HEK293 (cell line): ENCODE measurements at regions of chr3 and their contacts with region 1.

Region 1: GRCh38 chr3:150603153-150603979 is at the start of gene SELENOT:
- H3K4me3 ChIP-seq: peak within 1 kb of the TSS; percentile 83
- H3K27ac ChIP-seq: peak within 1 kb of the TSS; percentile 79
- H3K4me1 ChIP-seq: peaks cover 3% of the 10 kb centered on the region; the same call in 1 of the 2 replicates
- CTCF ChIP-seq: peak; percentile 97

Region 2: DNA sequence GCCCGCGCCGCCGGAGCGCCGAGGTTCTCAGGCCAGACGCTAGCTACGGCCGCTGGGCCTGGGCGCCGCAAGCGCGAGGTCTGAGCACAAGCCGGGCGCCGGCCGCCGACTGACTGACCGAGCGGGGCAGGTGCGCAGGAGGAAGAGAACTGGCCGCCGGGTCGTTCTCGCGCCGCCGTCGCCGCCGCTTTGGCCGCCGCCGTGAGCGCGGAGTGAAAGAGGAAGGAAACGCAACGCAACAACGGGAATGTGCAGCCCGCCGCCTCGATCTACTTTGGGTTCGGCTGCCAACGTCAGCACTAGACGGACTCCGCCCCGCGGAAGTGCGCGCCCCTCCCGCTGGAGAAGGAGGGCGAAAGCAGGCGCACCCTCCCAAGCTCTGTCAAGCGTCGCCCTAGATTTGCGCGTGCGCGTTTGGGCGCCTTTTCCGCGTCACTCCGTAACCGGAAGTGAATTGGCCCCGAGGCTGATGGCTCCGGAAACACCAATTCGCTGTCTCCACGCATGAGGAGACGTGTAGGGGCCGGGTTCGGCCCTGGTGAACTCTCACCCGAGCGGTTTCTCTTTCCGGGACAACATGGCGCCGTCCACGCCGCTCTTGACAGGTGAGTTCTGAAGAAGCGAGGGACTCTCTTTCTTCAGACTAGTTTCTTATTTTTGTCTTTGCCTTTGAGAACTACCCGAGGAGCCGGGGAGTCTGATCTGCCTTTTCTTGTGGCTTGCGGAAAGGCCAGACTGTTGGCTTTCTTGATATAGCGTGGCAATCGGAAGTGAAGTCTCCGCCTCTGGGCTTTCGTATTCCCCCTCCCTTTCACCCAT is 56.9 kb before region 1 on chr3 and contains the starts of genes EIF2A and SERP1:
- CTCF ChIA-PET with region 1: interaction called, 3 read pairs
- POLR2A ChIA-PET with region 1: interaction called, 11 read pairs
- H3K4me3 ChIP-seq: peak within 1 kb of the TSS; percentile 99
- H3K27ac ChIP-seq: peak within 1 kb of the TSS; percentile 87
- H3K4me1 ChIP-seq: peaks cover 14% of the 10 kb centered on the region; the same call in 1 of the 2 replicates
- CTCF ChIP-seq: peak; percentile 4; the same call in 1 of the 2 replicates

Region 3: DNA sequence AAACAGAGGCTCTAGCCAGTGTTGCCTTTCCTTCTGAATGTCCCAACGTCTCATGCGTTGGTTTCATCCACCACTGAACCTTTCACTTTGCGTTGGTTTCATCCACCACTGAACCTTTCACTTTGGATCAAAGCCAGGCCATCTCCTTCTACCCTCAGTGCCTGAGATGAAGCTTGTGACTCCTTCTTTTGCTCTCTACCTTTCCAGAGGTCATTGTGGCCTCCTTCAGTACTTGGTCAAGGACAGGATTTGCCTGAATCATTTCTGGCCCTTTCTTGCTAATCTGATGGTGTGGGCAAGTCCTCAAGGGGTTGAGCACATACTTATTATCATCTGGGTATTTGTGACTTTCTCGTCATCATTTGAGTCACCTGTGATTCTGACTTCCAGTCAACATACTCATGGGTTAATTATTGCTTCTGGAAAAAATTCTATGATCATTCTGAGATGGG is 49.8 kb after region 1 on chr3:
- CTCF ChIA-PET with region 1: no interaction called
- POLR2A ChIA-PET with region 1: no interaction called
- H3K4me3 ChIP-seq: no peak overlapping the region
- H3K27ac ChIP-seq: no peak overlapping the region
- H3K4me1 ChIP-seq: no peaks in the 10 kb centered on the region
- CTCF ChIP-seq: no peak

Region 4: DNA sequence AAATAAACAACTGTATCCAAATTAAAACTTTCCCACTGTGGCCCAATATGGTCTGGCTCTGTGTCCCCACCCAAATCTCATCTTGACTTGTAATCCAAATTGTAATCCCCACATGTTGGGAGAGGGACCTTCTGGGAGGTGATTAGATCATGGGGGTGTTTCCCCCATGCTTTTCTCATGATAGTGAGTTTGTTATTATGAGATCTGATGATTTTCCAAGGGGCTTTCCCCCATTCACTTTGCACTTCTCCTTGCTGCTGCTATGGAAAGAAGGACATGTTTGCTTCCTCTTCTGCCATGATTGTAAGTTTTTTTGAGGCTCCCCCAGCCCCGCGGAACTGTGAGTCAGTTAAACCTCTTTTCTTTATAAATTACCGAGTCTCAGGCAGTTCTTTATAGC is 246.8 kb after region 1 on chr3:
- CTCF ChIA-PET with region 1: no interaction called
- POLR2A ChIA-PET with region 1: no interaction called
- H3K4me3 ChIP-seq: no peak overlapping the region
- H3K27ac ChIP-seq: no peak overlapping the region
- H3K4me1 ChIP-seq: no peaks in the 10 kb centered on the region
- CTCF ChIP-seq: no peak